ENCODE measurements at regions of chr10 and their contacts with region 1.

Region 1: GRCh38 chr10:114520453-114520852 is 116.2 kb upstream of the AFAP1L2 start:
- DNase-seq: no peak
- CTCF ChIP-seq: no peak

Region 2: GRCh38 chr10:114499630-114500190 is 20.7 kb before region 1 on chr10:
- CTCF ChIA-PET with region 1: interaction called, 66 read pairs
- POLR2A ChIA-PET with region 1: interaction called, 4 read pairs
- DNase-seq: peak; percentile 24
- CTCF ChIP-seq: no peak

Region 3: DNA sequence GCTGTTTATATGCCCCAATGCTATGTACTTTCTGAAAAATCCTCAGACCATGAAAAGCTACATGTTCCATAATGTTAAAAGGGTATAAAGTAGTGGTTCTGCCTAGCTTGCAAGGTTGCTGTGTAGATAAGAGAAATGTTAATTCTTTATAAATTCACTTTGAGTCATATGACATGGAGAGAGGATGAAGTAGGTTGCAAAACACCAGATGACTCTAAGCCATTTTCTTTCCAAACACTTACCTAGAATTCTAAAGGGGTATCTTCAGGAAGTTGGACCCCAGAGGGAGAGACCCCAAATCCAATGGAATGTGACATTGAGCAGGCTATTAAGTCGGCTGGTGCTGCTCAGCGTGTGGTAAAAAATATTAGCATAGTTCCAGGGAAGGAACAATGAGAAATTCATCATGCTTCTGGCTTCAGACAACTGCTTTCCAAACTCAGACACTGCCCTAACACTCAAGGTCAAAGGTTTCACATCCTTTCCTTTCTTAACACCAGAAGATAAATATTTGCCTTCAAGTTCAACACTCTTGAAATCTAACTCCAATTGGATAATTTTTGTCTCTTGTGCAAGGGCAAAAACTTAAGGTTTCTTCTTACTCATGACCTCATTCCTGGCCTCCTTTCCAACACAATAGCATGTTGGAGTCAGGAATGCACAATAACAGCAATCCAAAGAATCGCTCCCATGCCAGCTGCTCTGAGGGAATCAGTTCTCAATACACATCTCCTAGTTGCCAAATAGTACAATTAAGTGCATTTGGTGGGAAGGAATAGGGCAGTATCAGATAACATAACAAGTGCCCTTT is 15.5 kb before region 1 on chr10:
- CTCF ChIA-PET with region 1: interaction called, 66 read pairs
- POLR2A ChIA-PET with region 1: no interaction called
- DNase-seq: no peak
- CTCF ChIP-seq: no peak

Region 4: GRCh38 chr10:114532226-114532625 is 11.8 kb after region 1 on chr10:
- CTCF ChIA-PET with region 1: interaction called, 19 read pairs
- POLR2A ChIA-PET with region 1: no interaction called
- DNase-seq: no peak
- CTCF ChIP-seq: no peak

Measured in GM10248 (cell line).